ENCODE measurements at regions of chr6 and their contacts with region 1.

Region 1: GRCh38 chr6:47134476-47135189 is 92.5 kb upstream of the ADGRF1 start:
- DNase-seq: no peak

Region 2: GRCh38 chr6:47241742-47242482 is 107.3 kb after region 1 on chr6:
- intact Hi-C with region 1: loop called in 1 of 2 experiments (anchors 1 kb)
- DNase-seq: no peak

Measured in posterior vena cava (tissue), 2 donors.